GM13976 (cell line): ENCODE measurements at regions of chr5 and their contacts with region 1.

Region 1: GRCh38 chr5:87116825-87117512 is 150.7 kb upstream of the RASA1 start:
- DNase-seq: peak; percentile 73
- CTCF ChIP-seq: no peak

Region 2: GRCh38 chr5:87340716-87341115 is 223.7 kb after region 1 on chr5:
- in situ Hi-C with region 1: loop called (anchors 10 kb)
- DNase-seq: peak; percentile 14
- CTCF ChIP-seq: no peak